Activated CD8-positive, alpha-beta T cell treated with anti-CD3 and anti-CD28 coated beads for 36 hours (primary cell): ENCODE measurements at regions of chr12 and their contacts with region 1.

Region 1: GRCh38 chr12:6039894-6040568 is 84.4 kb downstream of the VWF start:
- DNase-seq: peak; percentile 68
- ATAC-seq: peak; percentile 83
- H3K4me3 Mint-ChIP-seq: no peak overlapping the region
- H3K27ac Mint-ChIP-seq: no peak overlapping the region
- H3K4me1 Mint-ChIP-seq: peaks cover 2% of the 10 kb centered on the region
- H3K27me3 Mint-ChIP-seq: no peaks in the 10 kb centered on the region
- CTCF ChIP-seq: peak; percentile 82

Region 2: GRCh38 chr12:5898876-5899275 is 141.2 kb before region 1 on chr12:
- CTCF ChIA-PET with region 1: no interaction called
- POLR2A ChIA-PET with region 1: no interaction called
- intact Hi-C with region 1: no loop called
- DNase-seq: no peak
- ATAC-seq: no peak
- H3K4me3 Mint-ChIP-seq: no peak overlapping the region
- H3K27ac Mint-ChIP-seq: no peak overlapping the region
- H3K4me1 Mint-ChIP-seq: no peaks in the 10 kb centered on the region
- H3K27me3 Mint-ChIP-seq: peaks cover 27% of the 10 kb centered on the region
- CTCF ChIP-seq: no peak

Region 3: GRCh38 chr12:5965950-5966383 is 74.1 kb before region 1 on chr12:
- CTCF ChIA-PET with region 1: interaction called, 28 read pairs
- POLR2A ChIA-PET with region 1: no interaction called
- intact Hi-C with region 1: no loop called
- DNase-seq: peak; percentile 64
- ATAC-seq: peak; percentile 93
- H3K4me3 Mint-ChIP-seq: no peak overlapping the region
- H3K27ac Mint-ChIP-seq: no peak overlapping the region
- H3K4me1 Mint-ChIP-seq: no peaks in the 10 kb centered on the region
- H3K27me3 Mint-ChIP-seq: peaks cover 2% of the 10 kb centered on the region
- CTCF ChIP-seq: peak; percentile 65

Region 4: DNA sequence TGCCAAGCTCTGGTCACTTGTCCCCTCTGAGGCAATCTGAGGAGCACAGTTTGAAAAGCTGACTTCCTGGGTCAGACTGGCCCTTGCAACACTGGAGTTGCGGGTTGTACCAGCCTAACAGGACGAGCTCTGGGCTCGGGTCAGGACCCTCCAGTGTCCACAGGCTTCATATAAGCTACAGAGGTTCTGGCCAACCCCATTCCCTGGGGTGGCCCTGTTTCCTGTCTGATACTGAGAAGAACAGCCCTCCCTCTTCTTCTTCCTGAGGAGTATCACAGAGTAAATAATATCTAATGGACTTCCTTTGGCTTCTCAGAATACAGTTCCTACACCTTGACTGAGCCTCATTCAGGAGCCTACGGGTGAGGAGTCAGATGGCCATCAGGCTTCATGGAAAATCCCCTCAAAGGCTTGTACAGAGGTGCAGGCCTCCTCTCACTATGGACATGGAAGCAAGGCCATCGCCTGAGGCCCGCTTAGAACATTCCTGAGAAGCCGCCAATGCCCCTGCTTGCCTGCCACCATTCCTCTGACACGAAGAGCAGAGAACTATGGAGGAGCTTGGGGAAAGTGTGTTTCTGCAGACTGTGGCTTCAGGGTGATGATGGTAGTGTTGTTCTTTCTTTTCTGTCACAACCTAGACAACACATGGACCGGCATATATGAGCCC is 66.4 kb before region 1 on chr12:
- CTCF ChIA-PET with region 1: interaction called, 17 read pairs
- POLR2A ChIA-PET with region 1: no interaction called
- intact Hi-C with region 1: no loop called
- DNase-seq: no peak
- ATAC-seq: no peak
- H3K4me3 Mint-ChIP-seq: no peak overlapping the region
- H3K27ac Mint-ChIP-seq: no peak overlapping the region
- H3K4me1 Mint-ChIP-seq: no peaks in the 10 kb centered on the region
- H3K27me3 Mint-ChIP-seq: no peaks in the 10 kb centered on the region
- CTCF ChIP-seq: no peak

Region 5: GRCh38 chr12:6056406-6057240 is 16.6 kb after region 1 on chr12:
- CTCF ChIA-PET with region 1: interaction called, 10 read pairs
- POLR2A ChIA-PET with region 1: no interaction called
- intact Hi-C with region 1: no loop called
- DNase-seq: peak; percentile 63
- ATAC-seq: peak; percentile 84
- H3K4me3 Mint-ChIP-seq: peak overlapping the region; percentile 58
- H3K27ac Mint-ChIP-seq: peak overlapping the region; percentile 60
- H3K4me1 Mint-ChIP-seq: peaks cover 5% of the 10 kb centered on the region
- H3K27me3 Mint-ChIP-seq: no peaks in the 10 kb centered on the region
- CTCF ChIP-seq: peak; percentile 20